Caco-2 (cell line): ENCODE measurements at regions of chr5 and their contacts with region 1.

Region 1: DNA sequence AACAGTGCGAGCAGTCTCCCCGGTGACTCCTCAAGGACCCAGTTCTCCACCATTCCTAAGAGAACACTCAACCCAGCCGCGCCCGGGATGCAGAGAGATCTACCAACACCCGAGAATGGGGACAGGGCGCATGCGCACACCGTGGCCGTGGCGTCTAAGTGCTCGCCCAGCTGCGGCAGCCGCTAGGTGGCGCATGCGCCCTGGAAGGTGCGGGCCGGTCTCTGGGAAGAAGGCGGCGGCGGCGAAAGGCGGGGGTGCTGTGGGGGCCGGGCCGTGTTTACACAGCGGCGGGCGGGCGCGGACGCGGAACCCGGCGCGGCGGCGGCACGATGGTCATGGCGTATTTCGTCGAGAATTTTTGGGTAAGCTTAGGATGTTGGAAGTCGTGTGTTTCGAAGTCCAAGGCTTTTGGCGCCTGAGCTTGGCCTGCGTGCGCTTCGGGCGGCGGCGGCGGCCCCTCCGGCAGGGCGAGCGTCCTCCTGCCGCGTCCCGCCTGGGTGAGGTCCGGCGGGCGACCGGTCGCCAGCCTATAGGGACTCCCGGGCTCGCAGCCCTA is at the start of gene FCHO2:
- DNase-seq: peak; percentile 97 to 98
- H3K4me3 ChIP-seq: peak within 1 kb of the TSS; percentile 87
- H3K4me3 Mint-ChIP-seq: peak within 1 kb of the TSS; percentile 100
- H3K27ac Mint-ChIP-seq: peak within 1 kb of the TSS; percentile 95
- H3K4me1 ChIP-seq: peaks cover 11% of the 10 kb centered on the region; the same call in 1 of the 2 replicates
- H3K4me1 Mint-ChIP-seq: peaks cover 14% of the 10 kb centered on the region
- H3K27me3 ChIP-seq: no peaks in the 10 kb centered on the region
- H3K27me3 Mint-ChIP-seq: no peaks in the 10 kb centered on the region
- CTCF ChIP-seq: peak; percentile 73 to 90
- total RNA-seq, gene FCHO2: 20.6 and 22.9 TPM in 2 replicates

Region 2: GRCh38 chr5:72920690-72921502 is 35.0 kb before region 1 on chr5:
- CTCF ChIA-PET with region 1: no interaction called
- POLR2A ChIA-PET with region 1: no interaction called
- intact Hi-C with region 1: loop called (anchors 1 kb)
- DNase-seq: peak in 1 of 2 experiments; percentile 11
- H3K4me3 ChIP-seq: no peak overlapping the region
- H3K4me3 Mint-ChIP-seq: no peak overlapping the region
- H3K27ac Mint-ChIP-seq: no peak overlapping the region
- H3K4me1 ChIP-seq: no peaks in the 10 kb centered on the region
- H3K4me1 Mint-ChIP-seq: no peaks in the 10 kb centered on the region
- H3K27me3 ChIP-seq: no peaks in the 10 kb centered on the region
- H3K27me3 Mint-ChIP-seq: no peaks in the 10 kb centered on the region
- CTCF ChIP-seq: peak; percentile 25 to 28

Region 3: GRCh38 chr5:72938206-72938605 is 17.6 kb before region 1 on chr5:
- CTCF ChIA-PET with region 1: no interaction called
- POLR2A ChIA-PET with region 1: no interaction called
- intact Hi-C with region 1: loop called (anchors 2 kb)
- DNase-seq: no peak
- H3K4me3 ChIP-seq: no peak overlapping the region
- H3K4me3 Mint-ChIP-seq: no peak overlapping the region
- H3K27ac Mint-ChIP-seq: no peak overlapping the region
- H3K4me1 ChIP-seq: 0 out of 2 replicates have a peak, but pooled peaks cover 11% of the 10 kb centered on the region
- H3K4me1 Mint-ChIP-seq: peaks cover 22% of the 10 kb centered on the region
- H3K27me3 ChIP-seq: no peaks in the 10 kb centered on the region
- H3K27me3 Mint-ChIP-seq: peaks cover 19% of the 10 kb centered on the region
- CTCF ChIP-seq: no peak

Region 4: DNA sequence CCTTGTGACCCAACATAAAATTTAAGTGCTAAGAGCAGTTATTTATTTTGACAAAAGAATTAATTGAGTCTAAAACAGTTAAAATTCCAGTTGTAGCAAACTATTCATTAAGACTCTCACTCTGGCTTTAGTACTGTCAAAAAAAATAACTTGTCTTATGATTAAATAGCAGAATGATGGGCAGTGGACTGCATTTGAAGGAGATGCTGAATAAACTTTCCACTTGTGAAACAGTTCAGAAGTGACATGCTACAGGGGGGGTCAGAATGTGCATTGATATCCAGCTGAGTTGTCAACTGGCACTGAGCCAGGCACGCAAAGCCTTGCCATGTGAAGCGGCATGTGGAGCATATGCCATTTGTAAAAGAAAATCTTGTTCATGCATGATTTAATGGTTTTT is 76.0 kb after region 1 on chr5:
- CTCF ChIA-PET with region 1: no interaction called
- POLR2A ChIA-PET with region 1: no interaction called
- intact Hi-C with region 1: loop called (anchors 2 kb)
- DNase-seq: no peak
- H3K4me3 ChIP-seq: no peak overlapping the region
- H3K4me3 Mint-ChIP-seq: no peak overlapping the region
- H3K27ac Mint-ChIP-seq: peak overlapping the region; percentile 69
- H3K4me1 ChIP-seq: peaks cover 18% of the 10 kb centered on the region
- H3K4me1 Mint-ChIP-seq: peaks cover 24% of the 10 kb centered on the region
- H3K27me3 ChIP-seq: no peaks in the 10 kb centered on the region
- H3K27me3 Mint-ChIP-seq: no peaks in the 10 kb centered on the region
- CTCF ChIP-seq: no peak

Region 5: GRCh38 chr5:73044546-73044945 is 88.7 kb after region 1 on chr5:
- CTCF ChIA-PET with region 1: no interaction called
- POLR2A ChIA-PET with region 1: no interaction called
- intact Hi-C with region 1: no loop called
- DNase-seq: no peak
- H3K4me3 ChIP-seq: no peak overlapping the region
- H3K4me3 Mint-ChIP-seq: no peak overlapping the region
- H3K27ac Mint-ChIP-seq: no peak overlapping the region
- H3K4me1 ChIP-seq: peaks cover 10% of the 10 kb centered on the region
- H3K4me1 Mint-ChIP-seq: peaks cover 17% of the 10 kb centered on the region
- H3K27me3 ChIP-seq: no peaks in the 10 kb centered on the region
- H3K27me3 Mint-ChIP-seq: no peaks in the 10 kb centered on the region
- CTCF ChIP-seq: no peak

Region 6: DNA sequence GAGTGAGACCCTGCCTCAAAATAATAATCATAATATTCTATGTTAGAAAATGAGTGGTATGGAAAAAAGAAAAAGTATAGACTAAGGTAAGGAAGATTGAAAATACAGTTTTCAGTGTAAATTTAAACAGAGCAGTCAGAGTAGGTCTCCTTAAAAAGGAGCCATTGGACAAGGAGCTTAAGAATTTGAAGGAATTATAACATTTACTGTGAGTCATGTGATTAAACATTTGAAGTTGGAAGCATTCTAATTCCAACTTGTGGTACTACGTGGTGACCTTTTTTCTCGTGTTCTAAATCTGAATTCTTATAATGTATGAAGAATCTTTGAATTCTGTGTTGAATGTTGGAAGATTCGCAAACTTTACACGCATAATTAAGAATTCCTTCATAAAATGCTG is 125.2 kb after region 1 on chr5:
- CTCF ChIA-PET with region 1: no interaction called
- POLR2A ChIA-PET with region 1: no interaction called
- intact Hi-C with region 1: loop called (anchors 5 kb)
- DNase-seq: no peak
- H3K4me3 ChIP-seq: no peak overlapping the region
- H3K4me3 Mint-ChIP-seq: no peak overlapping the region
- H3K27ac Mint-ChIP-seq: no peak overlapping the region
- H3K4me1 ChIP-seq: no peaks in the 10 kb centered on the region
- H3K4me1 Mint-ChIP-seq: no peaks in the 10 kb centered on the region
- H3K27me3 ChIP-seq: no peaks in the 10 kb centered on the region
- H3K27me3 Mint-ChIP-seq: no peaks in the 10 kb centered on the region
- CTCF ChIP-seq: no peak

Region 7: DNA sequence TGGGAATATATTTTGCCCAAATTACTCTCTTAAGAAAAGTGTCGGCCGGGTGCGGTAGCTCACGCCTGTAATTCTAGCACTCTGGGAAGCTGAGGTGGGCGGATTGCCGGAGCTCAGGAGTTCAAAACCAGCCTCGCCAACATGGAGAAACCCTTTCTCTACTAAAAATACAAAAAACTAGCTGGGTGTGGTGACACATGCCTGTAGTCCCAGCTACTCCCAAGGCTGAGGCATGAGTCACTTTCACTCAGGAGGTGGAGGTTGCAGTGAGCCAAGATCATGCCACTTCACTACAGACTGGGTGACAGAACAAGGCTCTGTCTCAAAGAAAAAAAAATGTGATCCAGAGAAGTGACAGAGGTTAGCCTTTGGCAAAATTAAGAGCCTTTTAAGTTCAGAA is 138.1 kb after region 1 on chr5:
- CTCF ChIA-PET with region 1: no interaction called
- POLR2A ChIA-PET with region 1: no interaction called
- intact Hi-C with region 1: no loop called
- DNase-seq: no peak
- H3K4me3 ChIP-seq: no peak overlapping the region
- H3K4me3 Mint-ChIP-seq: no peak overlapping the region
- H3K27ac Mint-ChIP-seq: no peak overlapping the region
- H3K4me1 ChIP-seq: peaks cover 10% of the 10 kb centered on the region
- H3K4me1 Mint-ChIP-seq: peaks cover 15% of the 10 kb centered on the region
- H3K27me3 ChIP-seq: no peaks in the 10 kb centered on the region
- H3K27me3 Mint-ChIP-seq: no peaks in the 10 kb centered on the region
- CTCF ChIP-seq: no peak